ENCODE measurements at regions of chr11 and their contacts with region 1.

Region 1: GRCh38 chr11:68383976-68384501 is 71.6 kb downstream of the LRP5 start:
- DNase-seq: peak; percentile 66
- ATAC-seq: peak; percentile 8 to 27

Region 2: GRCh38 chr11:68257475-68258362 is 126.3 kb before region 1 on chr11:
- intact Hi-C with region 1: loop called in 1 of 2 experiments (anchors 5 kb)
- DNase-seq: peak; percentile 97
- ATAC-seq: peak; percentile 82 to 90

Region 3: GRCh38 chr11:68271781-68272608 is 112.0 kb before region 1 on chr11 and contains the start of gene C11orf24:
- intact Hi-C with region 1: loop called in 1 of 2 experiments (anchors 5 kb)
- DNase-seq: peak; percentile 96
- ATAC-seq: peak; percentile 96 to 97
- total RNA-seq, gene C11orf24: 28.7 to 42.0 TPM

Region 4: GRCh38 chr11:68312117-68312779 is 71.8 kb before region 1 on chr11 and contains the start of gene LRP5:
- intact Hi-C with region 1: loop called in 1 of 2 experiments (anchors 5 kb)
- DNase-seq: no peak
- ATAC-seq: peak; percentile 7 to 10
- total RNA-seq, gene LRP5: 53.4 to 60.3 TPM

Region 5: GRCh38 chr11:68328374-68329091 is 55.5 kb before region 1 on chr11:
- intact Hi-C with region 1: no loop called
- DNase-seq: peak; percentile 62
- ATAC-seq: peak; percentile 17 to 50

Region 6: GRCh38 chr11:68447015-68447801 is 63.2 kb after region 1 on chr11:
- intact Hi-C with region 1: loop called in 1 of 2 experiments (anchors 10 kb)
- DNase-seq: peak; percentile 83
- ATAC-seq: peak; percentile 91 to 93